GM13976 (cell line): ENCODE measurements at regions of chr12 and their contacts with region 1.

Region 1: GRCh38 chr12:117836999-117837736 is 131.6 kb downstream of the KSR2 start:
- DNase-seq: peak; percentile 77
- CTCF ChIP-seq: peak; percentile 96

Region 2: DNA sequence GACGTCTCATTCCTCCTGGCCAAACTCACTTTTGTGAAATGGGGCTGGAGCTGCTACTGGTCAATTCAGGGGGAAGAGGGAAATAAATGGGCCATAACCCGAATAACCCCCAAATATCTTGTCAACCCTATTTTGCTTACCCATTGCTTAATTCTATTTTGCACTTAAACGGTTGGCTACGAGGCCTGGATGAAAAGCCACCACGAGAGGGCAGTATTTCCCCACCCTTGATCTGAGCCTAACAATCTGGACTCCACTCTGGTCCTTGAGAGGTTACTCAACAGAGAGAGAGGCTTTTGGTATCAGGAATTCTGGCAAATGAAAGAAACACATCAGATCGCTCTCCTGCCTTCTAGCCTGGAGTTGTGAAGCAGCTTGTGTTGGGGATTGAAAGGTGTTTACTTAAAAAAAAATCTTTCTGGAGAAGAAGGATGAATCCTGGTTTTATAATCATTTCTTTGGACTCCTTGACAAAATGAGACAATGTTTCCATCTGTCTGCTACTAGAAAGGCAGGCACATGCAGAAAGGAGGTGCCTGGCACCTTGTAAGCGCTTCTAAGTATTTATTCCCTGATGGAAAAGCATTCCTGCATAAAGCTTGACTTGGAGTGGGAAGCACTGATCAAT is 624.5 kb before region 1 on chr12:
- in situ Hi-C with region 1: loop called (anchors 25 kb)
- DNase-seq: peak; percentile 79
- CTCF ChIP-seq: peak; percentile 85

Region 3: GRCh38 chr12:117367011-117367638 is 470.0 kb before region 1 on chr12:
- in situ Hi-C with region 1: loop called (anchors 25 kb)
- DNase-seq: peak; percentile 79
- CTCF ChIP-seq: peak; percentile 88